ENCODE measurements at regions of chr17 and their contacts with region 1.

Region 1: GRCh38 chr17:64420143-64420971 is 28.6 kb upstream of the MILR1 start:
- DNase-seq: peak; percentile 35 to 76
- H3K4me3 ChIP-seq: no peak overlapping the region
- H3K4me1 ChIP-seq: peaks cover 9% of the 10 kb centered on the region
- H3K27me3 ChIP-seq: peaks cover under 1% of the 10 kb centered on the region; the same call in 1 of the 2 replicates

Region 2: GRCh38 chr17:64320613-64321553 is 99.5 kb before region 1 on chr17:
- in situ Hi-C with region 1: loop called (anchors 5 kb)
- DNase-seq: peak; percentile 81 to 83
- H3K4me3 ChIP-seq: no peak overlapping the region
- H3K4me1 ChIP-seq: no peaks in the 10 kb centered on the region; the same call in 1 of the 2 replicates
- H3K27me3 ChIP-seq: no peaks in the 10 kb centered on the region

Region 3: DNA sequence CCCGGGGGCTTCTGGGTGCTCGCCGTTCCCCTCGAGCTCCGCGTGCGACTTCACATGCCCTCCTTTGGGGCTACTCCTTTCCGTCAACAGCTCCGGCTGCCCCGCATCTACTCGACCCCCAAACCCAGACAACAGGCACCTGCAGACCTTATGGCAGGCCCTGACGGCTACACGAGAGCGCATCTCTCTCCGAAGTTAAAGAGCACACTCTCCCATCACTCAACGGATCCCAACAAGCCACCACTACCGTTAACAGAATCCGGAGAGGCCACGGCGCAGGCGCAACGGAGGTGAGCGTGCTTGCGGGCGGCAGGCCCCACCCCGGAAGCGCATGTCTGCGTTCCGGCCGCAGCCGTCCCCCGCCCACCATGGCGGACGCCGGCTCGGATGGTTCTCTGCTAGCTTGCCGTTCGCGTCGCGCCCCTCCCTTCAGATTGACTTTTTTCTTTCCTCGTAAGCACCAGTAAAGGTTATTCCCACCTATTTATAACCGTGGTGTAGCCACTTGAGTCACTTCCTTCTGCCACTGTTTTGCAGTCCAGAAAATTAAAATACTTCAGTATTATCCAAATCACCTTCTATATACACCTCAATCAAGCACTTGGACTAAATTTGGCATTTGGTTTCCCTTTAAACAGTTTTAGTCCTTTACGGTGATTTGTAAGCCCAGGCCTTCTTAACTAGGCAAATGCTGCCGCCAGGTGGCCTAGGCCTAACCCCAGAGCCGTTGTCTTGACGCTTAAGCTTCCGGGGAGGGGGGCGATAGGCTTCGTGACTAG is 76.6 kb after region 1 on chr17 and contains the start of gene POLG2:
- in situ Hi-C with region 1: loop called (anchors 10 kb)
- DNase-seq: peak; percentile 90 to 96
- H3K4me3 ChIP-seq: peak within 1 kb of the TSS; percentile 69
- H3K4me1 ChIP-seq: peaks cover 15% of the 10 kb centered on the region
- H3K27me3 ChIP-seq: no peaks in the 10 kb centered on the region

Region 4: GRCh38 chr17:64648234-64648633 is 227.9 kb after region 1 on chr17:
- in situ Hi-C with region 1: loop called (anchors 10 kb)
- DNase-seq: no peak
- H3K4me3 ChIP-seq: no peak overlapping the region
- H3K4me1 ChIP-seq: no peaks in the 10 kb centered on the region; the same call in 1 of the 2 replicates
- H3K27me3 ChIP-seq: no peaks in the 10 kb centered on the region